Activated T-helper 1 cell treated with anti-CD3 and anti-CD28 coated beads, Interleukin-12 subunit alpha, Interleukin-12 subunit beta, Interleukin-2, Interleukin-4 antibody, amounts not matched to agents 30 ng/mL and 10 ng/mL and 1 ng/mL, durations not matched to agents 14 hours and 24 hours and 36 hours (primary cell): ENCODE measurements at regions of chr4 and their contacts with region 1.

Region 1: DNA sequence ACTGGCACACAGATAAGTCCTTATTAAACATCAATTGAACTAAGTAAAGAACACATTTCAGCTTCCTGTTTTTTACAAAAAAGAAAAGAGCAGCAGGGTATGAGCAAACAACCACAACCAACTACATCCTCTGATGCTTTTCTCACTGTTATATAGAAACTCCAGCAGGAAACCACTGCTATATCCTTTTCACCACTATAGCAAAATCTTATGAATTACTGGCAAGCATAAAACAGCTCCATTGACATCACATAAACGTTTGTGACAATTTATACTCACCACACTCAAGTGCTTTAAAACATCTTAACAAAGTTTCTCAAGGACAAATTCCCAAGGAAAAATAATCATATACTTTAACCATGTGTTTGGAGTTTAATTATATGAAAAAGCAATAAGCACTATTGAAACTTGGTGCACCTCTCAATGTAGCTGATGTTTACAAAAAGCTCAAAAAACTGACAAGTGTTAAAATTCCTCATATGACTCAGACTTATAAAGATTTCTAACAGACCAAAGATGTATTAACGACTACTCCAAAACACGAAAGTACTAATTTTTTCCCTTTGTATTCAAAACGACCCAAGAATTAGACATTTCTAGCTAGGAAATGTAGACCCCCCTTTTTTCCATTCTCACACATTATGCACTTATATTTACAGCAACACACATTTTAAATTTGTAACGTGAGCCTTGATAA is 12.9 kb downstream of the GPRIN3 start:
- DNase-seq: no peak
- H3K4me3 Mint-ChIP-seq: peak overlapping the region; percentile 77
- H3K27ac Mint-ChIP-seq: peak overlapping the region; percentile 99
- H3K4me1 Mint-ChIP-seq: peaks cover 89% of the 10 kb centered on the region
- H3K27me3 Mint-ChIP-seq: no peaks in the 10 kb centered on the region

Region 2: DNA sequence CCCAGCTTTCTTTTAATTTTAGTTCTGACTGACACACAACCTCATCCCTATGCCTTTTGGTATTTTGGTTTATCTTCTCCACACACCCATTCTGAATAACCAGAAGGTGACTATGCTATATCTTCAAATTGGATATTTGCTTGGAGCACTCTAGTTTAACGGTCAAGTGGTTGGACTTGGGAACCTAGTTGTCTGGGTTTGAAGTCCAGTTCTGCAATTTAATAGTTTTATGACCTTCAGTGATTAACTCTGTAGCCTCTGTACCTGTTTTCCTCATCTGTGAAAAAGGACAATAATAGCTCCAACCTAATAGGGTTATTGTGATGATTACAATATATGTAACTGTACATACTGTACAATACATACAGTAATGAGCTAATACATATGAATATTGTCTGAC is 1030.4 kb before region 1 on chr4:
- intact Hi-C with region 1: no loop called
- DNase-seq: no peak
- H3K4me3 Mint-ChIP-seq: no peak overlapping the region
- H3K27ac Mint-ChIP-seq: no peak overlapping the region
- H3K4me1 Mint-ChIP-seq: no peaks in the 10 kb centered on the region
- H3K27me3 Mint-ChIP-seq: no peaks in the 10 kb centered on the region

Region 3: GRCh38 chr4:88378691-88379559 is 915.8 kb before region 1 on chr4 and contains the start of gene HERC6:
- intact Hi-C with region 1: loop called (anchors 10 kb)
- DNase-seq: peak; percentile 80
- H3K4me3 Mint-ChIP-seq: peak within 1 kb of the TSS; percentile 89
- H3K27ac Mint-ChIP-seq: peak within 1 kb of the TSS; percentile 81
- H3K4me1 Mint-ChIP-seq: peaks cover 47% of the 10 kb centered on the region
- H3K27me3 Mint-ChIP-seq: no peaks in the 10 kb centered on the region
- total RNA-seq, gene HERC6: 6.0 and 9.1 TPM in 2 replicates

Region 4: DNA sequence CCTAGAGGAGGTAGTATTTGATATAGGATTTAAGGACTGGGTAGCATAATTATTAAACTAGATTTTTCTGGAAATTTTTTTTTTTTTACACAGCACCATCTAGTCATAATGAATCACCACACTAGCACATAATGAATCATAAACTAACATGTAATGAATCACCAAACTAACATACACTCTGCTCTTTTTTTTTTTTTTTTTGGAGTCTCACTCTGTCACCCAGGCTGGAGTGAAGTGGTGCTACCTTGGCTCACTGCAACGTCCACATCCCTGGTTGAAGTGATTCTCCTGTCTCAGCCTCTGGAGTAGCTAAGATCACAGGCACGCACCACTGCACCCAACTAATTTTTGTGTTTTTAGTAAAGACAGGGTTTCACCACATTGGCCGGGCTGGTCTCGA is 330.3 kb before region 1 on chr4:
- intact Hi-C with region 1: loop called (anchors 5 kb)
- DNase-seq: no peak
- H3K4me3 Mint-ChIP-seq: no peak overlapping the region
- H3K27ac Mint-ChIP-seq: no peak overlapping the region
- H3K4me1 Mint-ChIP-seq: peaks cover 18% of the 10 kb centered on the region
- H3K27me3 Mint-ChIP-seq: peaks cover 9% of the 10 kb centered on the region

Region 5: DNA sequence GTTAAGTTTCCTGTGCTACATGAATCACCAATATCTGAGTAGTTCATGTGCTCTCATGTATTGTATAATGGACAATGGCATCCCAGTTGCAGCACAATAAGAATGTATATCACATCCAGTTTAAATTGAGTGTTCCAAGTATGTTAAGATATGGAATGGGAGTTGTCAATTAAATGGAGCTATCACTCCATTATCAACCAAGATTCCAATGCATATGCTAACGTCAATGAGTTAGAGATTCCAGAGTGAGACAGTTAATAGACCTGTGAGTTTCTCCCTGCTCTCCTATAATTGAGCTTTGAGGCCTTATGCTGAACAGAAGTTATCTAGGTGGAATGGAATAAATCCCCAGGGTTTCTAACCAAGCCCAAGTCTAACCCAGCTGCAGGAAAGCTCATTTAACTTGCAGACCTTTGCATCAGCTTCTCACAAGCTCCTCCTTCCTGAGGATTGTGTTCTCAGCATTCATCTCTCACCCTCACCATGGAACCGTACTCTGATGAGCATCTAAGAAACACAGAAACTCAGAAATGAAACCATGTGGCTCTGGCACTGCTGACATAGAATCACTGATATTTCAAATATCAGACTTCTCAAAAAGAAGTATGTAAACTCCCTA is 98.6 kb before region 1 on chr4:
- intact Hi-C with region 1: no loop called
- DNase-seq: no peak
- H3K4me3 Mint-ChIP-seq: no peak overlapping the region
- H3K27ac Mint-ChIP-seq: no peak overlapping the region
- H3K4me1 Mint-ChIP-seq: no peaks in the 10 kb centered on the region
- H3K27me3 Mint-ChIP-seq: peaks cover 7% of the 10 kb centered on the region

Region 6: DNA sequence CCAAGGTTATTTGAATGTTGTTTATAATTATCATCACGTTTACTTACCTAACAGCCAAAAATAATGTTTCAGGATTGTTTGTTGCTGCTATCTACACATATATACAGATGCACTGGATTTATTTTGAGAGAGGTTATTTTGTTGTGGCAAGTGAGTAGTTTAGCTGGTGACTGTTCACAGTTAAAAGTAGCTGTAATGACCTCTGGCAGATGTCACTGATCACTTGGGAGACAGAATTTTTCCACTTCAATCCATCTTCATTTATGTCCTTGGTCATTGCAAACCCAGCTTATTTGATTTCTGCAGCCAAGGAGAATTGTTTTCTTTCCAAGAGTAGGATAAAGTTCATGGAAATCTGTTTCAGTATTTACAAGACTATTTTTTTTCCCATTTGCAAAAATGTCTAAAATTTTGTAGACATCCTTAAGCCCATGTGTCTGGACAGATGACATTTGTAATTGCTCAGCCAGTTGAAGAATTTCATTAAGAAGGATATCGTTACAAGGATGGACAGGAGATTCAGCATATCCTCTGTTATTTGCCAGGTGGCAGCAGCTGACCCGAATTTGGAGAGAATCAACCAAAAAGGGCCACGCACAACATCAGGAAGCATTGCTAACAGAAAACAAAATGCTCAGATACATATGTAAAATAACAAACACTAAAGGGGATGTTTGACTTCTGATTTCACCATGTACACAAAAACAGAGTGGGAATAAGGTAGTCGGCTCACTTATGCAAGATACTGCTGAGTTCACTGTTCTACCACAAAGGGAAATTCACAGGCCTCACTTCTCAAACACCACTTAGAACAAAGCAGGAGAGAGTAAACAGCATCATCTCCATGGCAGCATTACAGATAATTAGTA is 51.6 kb before region 1 on chr4:
- intact Hi-C with region 1: loop called (anchors 1 kb)
- DNase-seq: peak; percentile 27
- H3K4me3 Mint-ChIP-seq: peak overlapping the region; percentile 24
- H3K27ac Mint-ChIP-seq: peak overlapping the region; percentile 82
- H3K4me1 Mint-ChIP-seq: peaks cover 58% of the 10 kb centered on the region
- H3K27me3 Mint-ChIP-seq: no peaks in the 10 kb centered on the region

Region 7: DNA sequence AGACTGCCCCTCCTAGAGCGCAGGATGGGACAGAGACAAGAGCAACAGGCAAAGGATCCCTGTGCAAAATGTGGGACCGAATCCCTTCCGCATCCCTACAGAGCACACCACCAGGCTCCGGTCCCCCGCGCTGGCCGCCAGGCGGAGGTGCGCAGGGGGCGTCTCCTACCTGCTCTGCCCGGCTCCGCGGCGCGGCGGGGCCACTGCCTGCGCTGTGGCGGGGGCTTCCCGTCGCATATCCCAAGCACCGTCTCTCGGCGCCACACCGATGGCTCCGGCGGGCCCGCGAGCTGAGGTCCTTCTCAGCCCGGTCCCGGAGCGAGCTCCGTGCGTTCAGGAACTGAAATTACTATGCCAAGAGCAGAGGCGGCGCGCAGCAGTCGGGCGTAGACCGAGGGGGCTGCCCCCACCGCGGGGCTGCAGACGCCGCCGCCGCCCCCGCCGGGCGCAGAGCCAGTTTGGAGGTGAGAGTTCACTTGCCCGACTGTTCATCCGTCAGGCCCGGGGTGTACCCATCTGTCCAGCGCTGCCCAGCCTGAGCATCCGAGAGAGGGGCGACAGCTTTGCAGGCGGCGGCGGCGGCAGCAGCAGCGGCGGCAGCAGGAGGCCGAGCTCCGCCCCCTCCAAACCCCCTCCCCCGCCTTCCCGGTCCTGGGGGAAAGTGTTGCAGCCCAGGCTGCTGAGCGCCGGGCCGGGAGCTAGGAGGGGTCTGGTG is 12.9 kb after region 1 on chr4 and contains the start of gene GPRIN3:
- intact Hi-C with region 1: loop called (anchors 1 kb)
- DNase-seq: peak; percentile 58
- H3K4me3 Mint-ChIP-seq: peak within 1 kb of the TSS; percentile 95
- H3K27ac Mint-ChIP-seq: peak within 1 kb of the TSS; percentile 97
- H3K4me1 Mint-ChIP-seq: peaks cover 72% of the 10 kb centered on the region
- H3K27me3 Mint-ChIP-seq: no peaks in the 10 kb centered on the region
- total RNA-seq, gene GPRIN3: 37.1 and 39.0 TPM in 2 replicates

Region 8: DNA sequence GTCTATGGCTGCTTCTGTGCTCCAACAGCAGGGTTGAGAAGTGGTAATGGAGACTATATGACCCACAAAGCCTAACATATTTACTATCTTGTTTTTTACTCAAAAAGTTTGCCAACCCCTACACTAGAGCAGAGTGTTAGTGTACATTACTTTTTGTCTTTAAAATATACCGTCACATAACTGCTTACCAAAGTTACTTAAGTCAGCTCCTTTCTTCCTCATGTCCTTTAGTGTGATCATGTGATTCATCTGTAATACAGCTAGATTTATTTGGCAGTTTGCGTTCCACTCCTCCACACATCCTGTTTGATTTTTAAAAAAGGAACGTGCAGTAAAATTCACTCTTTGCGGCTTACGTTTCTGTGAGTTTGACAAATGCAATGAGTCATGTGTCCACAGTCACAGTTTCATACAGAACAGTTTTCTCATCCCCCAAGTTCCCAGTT is 175.2 kb after region 1 on chr4:
- intact Hi-C with region 1: loop called (anchors 5 kb)
- DNase-seq: peak; percentile 19
- H3K4me3 Mint-ChIP-seq: peak overlapping the region; percentile 16
- H3K27ac Mint-ChIP-seq: peak overlapping the region; percentile 18
- H3K4me1 Mint-ChIP-seq: peaks cover 21% of the 10 kb centered on the region
- H3K27me3 Mint-ChIP-seq: no peaks in the 10 kb centered on the region